Dorsolateral prefrontal cortex (tissue), 120 donors: ENCODE measurements at regions of chr10 and their contacts with region 1.

Region 1: DNA sequence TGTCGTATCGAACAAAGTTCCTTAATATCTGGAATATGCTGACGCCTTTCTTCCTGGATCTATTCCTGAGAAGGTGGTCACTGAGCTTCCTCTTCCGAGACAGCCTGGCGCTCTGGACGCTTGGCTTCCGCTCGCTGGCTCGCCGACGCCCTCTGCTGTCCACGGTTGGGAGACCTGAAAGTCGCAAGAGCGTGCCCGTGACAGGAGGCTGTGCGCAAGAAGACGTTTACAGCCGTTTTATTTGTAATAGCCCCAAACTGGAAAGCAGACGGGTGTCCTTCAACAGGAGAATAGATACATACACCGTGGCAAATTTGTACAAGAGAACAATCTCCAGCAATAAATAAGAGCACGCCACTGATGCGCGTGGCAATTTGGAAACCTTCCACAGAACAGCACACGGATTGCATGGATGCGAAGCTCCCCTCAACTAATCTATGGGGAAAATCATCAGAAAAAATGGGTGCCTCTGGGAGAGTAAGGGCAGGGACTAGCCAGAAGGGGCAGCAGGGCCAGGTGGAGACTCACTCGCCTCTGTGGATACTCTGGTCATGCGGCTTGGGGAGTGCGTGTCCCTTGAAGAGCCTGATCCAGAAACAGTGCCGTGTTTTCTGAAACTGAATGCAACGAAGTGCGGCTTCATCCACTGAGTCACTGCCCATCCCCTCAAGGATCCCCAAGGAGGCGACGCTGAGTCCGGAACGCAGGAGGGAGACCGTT is 41.5 kb upstream of the BNIP3 start:
- DNase-seq: peak; percentile 78 to 91 (median 82)
- H3K4me3 ChIP-seq: peak overlapping the region; percentile 43 to 81 (median 62)
- H3K27ac ChIP-seq: peak overlapping the region in 9 of 59 donors; percentile 6 to 64 (median 38)
- H3K27me3 ChIP-seq: no peaks in the 10 kb centered on the region
- CTCF ChIP-seq: peak; percentile 74 to 97 (median 93)

Region 2: GRCh38 chr10:130179640-130180039 is 1843.6 kb before region 1 on chr10:
- intact Hi-C with region 1: loop called in 1 of 2 experiments (anchors 10 kb)
- DNase-seq: peak in 4 of 10 donors; percentile 19 to 74 (median 48)
- H3K4me3 ChIP-seq: peak overlapping the region in 11 of 59 donors; percentile 3 to 33 (median 14)
- H3K27ac ChIP-seq: peak overlapping the region in 45 of 59 donors; percentile 8 to 81 (median 51)
- H3K27me3 ChIP-seq: no peaks in the 10 kb centered on the region
- CTCF ChIP-seq: peak; percentile 41 to 80 (median 66)

Region 3: DNA sequence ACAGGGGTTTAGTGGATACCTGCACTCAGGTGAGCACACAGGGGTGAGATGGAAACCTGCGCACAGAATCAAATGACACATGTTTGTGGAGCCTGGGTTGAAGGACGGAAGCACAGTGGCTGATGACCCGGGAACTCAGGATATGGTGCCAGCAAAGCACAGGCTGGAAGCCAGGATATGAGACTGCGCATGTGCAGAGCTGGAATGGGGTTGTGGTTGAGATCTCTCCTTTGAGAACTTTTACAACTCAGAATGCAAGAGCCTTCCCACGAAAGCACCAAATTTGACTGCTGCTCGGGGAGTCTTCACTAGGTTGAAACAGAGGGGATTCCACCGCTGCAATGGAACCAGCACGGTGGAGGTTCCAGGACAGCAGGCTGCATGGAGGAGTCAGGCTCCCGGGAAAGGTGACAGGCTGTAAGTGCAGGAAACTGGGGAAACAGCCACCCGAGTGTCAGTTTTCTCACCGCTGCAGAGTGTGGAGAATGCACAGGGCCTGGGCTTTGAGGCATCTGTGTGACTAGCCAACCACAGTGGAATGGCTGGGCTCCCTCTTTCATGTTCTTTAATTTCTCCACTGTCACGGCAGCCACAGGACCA is 578.3 kb before region 1 on chr10:
- intact Hi-C with region 1: no loop called
- DNase-seq: peak in 1 of 10 donors; percentile 22
- H3K4me3 ChIP-seq: no peak overlapping the region
- H3K27ac ChIP-seq: no peak overlapping the region
- H3K27me3 ChIP-seq: peaks cover 0 to 35% (median 0%) of the 10 kb centered on the region in 45 donors
- CTCF ChIP-seq: no peak

Region 4: DNA sequence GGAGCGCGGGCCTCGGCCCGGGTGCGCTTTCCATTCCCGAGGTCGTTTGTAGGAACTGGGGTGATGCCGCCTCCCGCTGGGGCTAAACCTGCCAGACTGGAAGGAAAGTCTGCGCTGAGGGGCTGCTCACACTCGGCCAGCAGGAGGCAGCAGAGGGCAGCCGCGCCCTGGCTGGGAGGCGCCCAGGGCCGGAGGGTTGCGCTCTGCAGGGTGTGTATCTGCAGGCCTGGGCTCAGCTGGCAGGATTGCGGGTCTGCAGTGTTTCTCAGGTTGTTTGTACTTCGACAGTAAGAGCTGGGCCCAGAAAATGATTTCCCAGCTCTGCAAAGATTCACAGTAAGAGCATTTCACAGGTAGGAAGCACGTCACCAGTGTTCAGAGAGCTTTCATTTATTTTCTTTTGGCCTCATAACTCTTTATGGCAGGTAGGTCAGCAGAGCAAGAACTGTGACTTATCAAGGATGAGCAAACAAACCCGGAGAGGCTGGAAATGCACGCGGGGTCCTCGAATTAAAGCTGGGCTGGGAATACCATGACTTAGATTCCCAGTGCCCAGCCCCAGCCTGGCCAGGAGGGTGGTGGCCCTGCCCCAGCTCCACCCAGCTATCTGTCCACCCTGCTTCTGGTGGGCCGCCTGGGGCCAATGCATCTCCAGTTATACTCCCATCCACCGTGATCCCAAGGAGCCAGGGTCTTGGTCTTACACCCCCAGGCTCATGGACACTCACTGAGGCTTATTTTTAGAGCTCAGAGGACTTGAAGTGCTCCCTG is 137.7 kb before region 1 on chr10:
- intact Hi-C with region 1: loop called (anchors 1 kb)
- DNase-seq: peak; percentile 32 to 82 (median 66)
- H3K4me3 ChIP-seq: peak overlapping the region in 6 of 59 donors; percentile 4 to 27 (median 20)
- H3K27ac ChIP-seq: no peak overlapping the region
- H3K27me3 ChIP-seq: peaks cover 0 to 8% (median 0%) of the 10 kb centered on the region in 45 donors
- CTCF ChIP-seq: peak; percentile 67 to 99 (median 95)

Region 5: DNA sequence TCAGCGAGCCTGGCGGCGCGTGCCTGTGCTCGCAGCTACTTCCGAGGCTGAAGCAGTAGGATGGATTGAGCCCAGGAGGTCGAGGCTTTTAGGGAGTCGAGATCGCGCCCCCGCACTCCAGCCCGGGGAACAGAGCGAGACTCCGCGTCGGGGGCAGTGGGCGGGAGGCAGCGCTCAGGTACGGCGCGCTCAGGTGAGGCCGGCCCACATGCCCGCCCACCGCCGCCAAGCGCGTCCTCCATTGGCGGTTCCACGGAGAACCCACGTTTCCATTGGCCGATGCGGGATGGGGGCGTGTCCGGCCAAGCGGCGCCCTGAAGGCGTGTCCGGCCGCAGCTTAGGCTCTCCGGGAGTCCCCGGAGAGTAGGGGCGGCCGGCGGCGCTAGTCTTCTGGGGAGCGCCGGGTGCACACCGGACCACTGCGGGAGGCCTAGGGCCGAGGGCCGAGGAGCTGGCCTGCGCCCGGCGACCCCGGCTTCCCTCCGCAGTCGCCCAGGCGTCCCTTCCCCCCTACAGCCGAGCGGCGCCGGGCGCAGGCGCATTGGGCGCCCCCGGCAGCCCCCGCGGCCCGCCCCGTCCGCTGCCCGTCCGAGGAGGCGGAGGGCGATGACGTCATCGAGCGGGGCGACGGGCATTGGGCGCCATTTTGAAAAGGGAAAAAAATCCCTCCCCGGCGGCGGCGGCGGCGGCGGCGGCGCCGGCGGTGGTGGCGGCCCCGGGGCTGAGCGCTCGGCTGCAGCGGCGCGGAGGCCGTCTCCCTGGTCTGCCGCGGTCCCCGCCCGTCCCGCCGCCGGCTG is 122.7 kb before region 1 on chr10 and contains the start of gene PPP2R2D:
- intact Hi-C with region 1: loop called in 1 of 2 experiments (anchors 2 kb)
- DNase-seq: peak; percentile 86 to 97 (median 94)
- H3K4me3 ChIP-seq: peak within 1 kb of the TSS; percentile 56 to 99 (median 91)
- H3K27ac ChIP-seq: peak within 1 kb of the TSS in 58 of 59 donors; percentile 8 to 95 (median 86)
- H3K27me3 ChIP-seq: no peaks in the 10 kb centered on the region
- CTCF ChIP-seq: peak in 23 of 56 donors; percentile 8 to 49 (median 27)
- total RNA-seq, gene PPP2R2D: 37.7 to 70.2 (median 51.6) TPM

Region 6: DNA sequence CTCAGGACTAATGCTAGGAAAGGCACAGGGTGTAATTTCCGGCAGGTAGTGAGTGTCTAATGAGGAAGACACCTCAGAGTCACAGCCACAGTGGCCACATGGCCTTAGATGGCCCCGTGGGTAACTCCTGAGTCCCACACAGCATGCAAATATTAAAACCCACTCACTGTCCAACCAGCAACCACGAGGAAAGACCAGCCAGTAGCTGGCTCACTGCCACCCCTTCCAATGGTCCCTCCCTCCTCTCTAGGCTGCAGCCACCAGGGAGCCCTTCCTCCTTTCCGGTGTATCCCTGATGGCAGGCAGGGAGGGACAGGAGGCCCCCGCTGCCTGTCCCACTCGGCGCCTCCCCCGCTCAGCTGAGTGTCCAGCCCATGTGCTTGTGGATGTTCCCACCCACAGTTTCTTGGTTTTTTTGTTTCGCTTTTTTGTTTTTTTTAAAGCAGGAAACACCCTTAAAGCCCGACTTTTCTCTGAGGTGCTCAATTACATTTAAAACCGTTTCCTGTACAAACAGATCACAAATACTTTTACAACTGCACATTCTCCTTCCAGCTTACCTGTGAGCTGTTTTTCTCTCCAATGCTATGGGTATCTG is 50.7 kb before region 1 on chr10:
- intact Hi-C with region 1: loop called in 1 of 2 experiments (anchors 10 kb)
- DNase-seq: peak in 3 of 10 donors; percentile 49 to 68 (median 50)
- H3K4me3 ChIP-seq: peak overlapping the region in 30 of 59 donors; percentile 7 to 43 (median 20)
- H3K27ac ChIP-seq: peak overlapping the region in 48 of 59 donors; percentile 1 to 84 (median 64)
- H3K27me3 ChIP-seq: no peaks in the 10 kb centered on the region
- CTCF ChIP-seq: peak in 2 of 56 donors; percentile 5 to 14

Region 7: GRCh38 chr10:131981429-131982184 is 41.6 kb before region 1 on chr10 and contains the start of gene BNIP3:
- intact Hi-C with region 1: loop called (anchors 5 to 10 kb)
- DNase-seq: peak; percentile 75 to 97 (median 88)
- H3K4me3 ChIP-seq: peak within 1 kb of the TSS; percentile 59 to 99 (median 92)
- H3K27ac ChIP-seq: peak within 1 kb of the TSS in 58 of 59 donors; percentile 20 to 94 (median 81)
- H3K27me3 ChIP-seq: no peaks in the 10 kb centered on the region
- CTCF ChIP-seq: peak in 6 of 56 donors; percentile 7 to 18 (median 11)
- total RNA-seq, gene BNIP3: 73.1 to 211 (median 119) TPM

Region 8: DNA sequence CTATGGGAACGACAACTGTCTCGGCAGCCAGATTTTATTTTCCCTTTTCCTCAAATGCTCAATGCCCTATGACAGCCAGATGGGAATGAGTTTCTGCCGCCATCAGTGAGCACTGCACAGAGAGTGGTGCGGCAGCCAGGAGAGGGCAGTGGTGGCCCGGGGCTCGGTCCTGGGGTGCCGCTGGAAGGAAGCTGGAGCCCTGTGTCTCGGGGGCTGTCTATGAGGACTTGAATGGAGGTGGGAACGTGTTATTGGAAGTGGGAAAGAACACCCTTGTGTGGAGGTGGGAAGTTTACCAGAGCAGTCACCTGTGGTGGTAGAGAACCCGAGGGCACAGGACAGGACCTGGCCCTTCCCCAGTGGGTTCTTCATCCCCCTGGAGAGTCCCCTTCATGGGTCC is 78.3 kb after region 1 on chr10:
- intact Hi-C with region 1: loop called in 1 of 2 experiments (anchors 2 kb)
- DNase-seq: peak in 9 of 10 donors; percentile 7 to 64 (median 38)
- H3K4me3 ChIP-seq: no peak overlapping the region
- H3K27ac ChIP-seq: peak overlapping the region in 1 of 59 donors; percentile 38
- H3K27me3 ChIP-seq: no peaks in the 10 kb centered on the region
- CTCF ChIP-seq: peak in 53 of 56 donors; percentile 18 to 74 (median 51)

Region 9: DNA sequence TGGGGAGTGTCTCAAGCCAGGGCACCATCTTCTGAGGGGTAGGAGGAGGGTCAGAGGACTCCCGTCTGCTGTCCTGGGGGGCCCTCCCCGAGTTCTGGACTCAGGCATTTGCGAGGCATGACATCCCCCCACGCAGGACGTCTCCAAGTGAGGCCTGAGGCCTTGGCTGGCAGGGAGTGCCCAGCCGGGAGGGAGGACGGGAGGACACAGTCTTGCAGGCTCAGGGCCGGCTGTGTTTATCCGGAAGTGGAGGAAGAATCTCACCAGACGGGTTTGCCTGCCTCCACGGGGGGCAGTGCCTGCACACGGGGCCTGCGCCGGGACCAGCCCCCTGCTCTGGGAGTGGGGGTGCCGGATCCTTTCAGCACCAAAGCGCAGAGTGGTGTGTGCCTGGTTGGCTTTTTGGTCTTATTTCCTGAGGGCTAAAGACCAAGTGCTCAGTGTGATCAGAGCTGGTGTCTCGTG is 384.6 kb after region 1 on chr10:
- intact Hi-C with region 1: no loop called
- DNase-seq: peak in 2 of 10 donors; percentile 52 to 60
- H3K4me3 ChIP-seq: peak overlapping the region in 33 of 59 donors; percentile 1 to 44 (median 17)
- H3K27ac ChIP-seq: peak overlapping the region in 54 of 59 donors; percentile 22 to 85 (median 64)
- H3K27me3 ChIP-seq: no peaks in the 10 kb centered on the region
- CTCF ChIP-seq: no peak